Posterior vena cava (tissue), 2 donors: ENCODE measurements at regions of chr15 and their contacts with region 1.

Region 1: DNA sequence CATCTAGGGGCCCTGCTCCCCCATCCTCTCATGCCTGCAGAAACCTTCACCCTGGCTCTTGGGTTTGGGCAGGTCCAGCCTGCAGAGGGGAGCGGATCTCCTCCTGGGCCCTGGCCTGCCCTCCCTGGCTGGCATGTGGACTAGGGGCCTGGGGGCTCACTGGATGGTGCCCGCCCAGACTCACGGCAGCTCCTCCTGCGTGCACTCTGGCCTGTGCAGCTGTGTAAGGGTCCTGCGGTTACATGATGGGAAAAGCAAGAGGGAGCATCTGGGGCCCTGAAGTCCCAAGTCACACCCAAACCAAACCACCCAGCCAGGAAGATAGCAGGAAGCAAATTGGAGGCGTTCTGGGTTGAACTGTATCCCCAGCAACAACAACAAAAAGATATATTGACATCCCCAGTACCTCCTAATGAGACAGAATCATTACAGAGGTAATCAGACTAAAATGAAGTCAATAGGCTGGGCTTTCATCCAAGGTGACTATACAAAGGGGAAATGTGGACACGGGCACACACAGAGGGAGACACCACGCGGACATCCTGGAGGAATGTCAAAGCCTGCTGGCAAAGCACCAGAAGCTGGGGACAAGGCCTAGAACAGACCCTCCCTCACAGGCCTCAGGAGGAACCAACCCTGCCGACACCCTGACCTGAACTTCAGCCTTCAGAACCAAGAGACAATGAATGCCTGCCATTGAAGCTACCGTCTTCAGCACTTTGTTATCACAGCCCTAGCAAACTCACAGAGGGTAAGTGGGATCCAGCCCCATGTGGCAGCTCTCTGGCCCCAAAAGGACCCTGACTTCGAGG is 10.4 kb upstream of the CLK3 start:
- DNase-seq: no peak

Region 2: DNA sequence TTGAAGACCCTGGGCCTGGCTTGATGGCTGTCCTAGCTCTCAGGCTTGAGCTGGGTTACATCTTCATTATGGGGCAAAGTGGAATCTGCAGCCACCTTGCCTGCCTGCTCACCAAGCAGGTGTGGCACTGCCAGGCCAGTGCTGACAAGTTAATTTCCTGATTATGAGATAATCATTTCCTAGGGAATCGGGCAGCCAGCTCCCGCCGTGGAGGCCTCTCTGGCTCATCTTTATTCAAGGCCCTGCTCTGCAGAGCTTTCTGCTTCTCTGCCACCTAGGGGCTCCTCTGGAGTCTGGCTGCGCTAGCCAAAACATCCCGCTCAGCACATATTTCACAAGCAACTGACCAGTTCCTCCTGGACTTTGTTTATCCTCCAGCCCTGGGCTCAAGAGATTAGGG is 669.0 kb before region 1 on chr15:
- intact Hi-C with region 1: loop called in 1 of 2 experiments (anchors 5 kb)
- DNase-seq: peak; percentile 82

Region 3: GRCh38 chr15:74307827-74308644 is 297.2 kb before region 1 on chr15:
- intact Hi-C with region 1: no loop called
- DNase-seq: no peak

Region 4: DNA sequence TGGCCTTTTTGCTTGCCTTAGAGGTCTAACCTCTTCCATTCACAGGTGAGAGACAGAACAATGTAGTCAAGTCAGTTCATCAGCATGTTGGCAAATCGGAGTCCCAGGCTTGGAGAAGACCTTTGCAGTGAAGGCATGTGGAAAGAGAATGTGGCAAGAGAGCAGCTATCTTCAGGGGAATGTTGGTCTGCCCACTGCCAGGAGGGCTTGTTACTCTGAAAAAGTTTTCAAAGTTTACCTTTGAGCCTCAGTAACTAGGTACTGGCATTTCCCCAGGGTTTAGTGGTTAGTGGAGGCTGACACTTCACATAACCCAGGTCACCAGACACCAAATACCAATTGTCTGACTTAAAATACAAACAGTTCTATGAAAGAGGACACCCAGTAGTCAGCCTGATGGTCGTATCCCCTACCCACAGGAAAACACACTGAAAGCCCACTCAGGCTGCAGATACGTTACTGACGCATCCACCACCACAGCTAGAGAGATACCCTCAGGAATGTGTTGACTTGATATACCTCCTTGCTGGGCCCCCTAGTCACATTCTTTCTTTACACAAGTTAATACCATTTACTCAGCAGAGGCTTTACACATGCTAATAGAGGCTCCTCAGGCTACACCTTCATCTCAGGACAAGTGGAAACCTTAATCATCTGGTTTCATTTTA is 73.9 kb before region 1 on chr15:
- intact Hi-C with region 1: no loop called
- DNase-seq: no peak

Region 5: DNA sequence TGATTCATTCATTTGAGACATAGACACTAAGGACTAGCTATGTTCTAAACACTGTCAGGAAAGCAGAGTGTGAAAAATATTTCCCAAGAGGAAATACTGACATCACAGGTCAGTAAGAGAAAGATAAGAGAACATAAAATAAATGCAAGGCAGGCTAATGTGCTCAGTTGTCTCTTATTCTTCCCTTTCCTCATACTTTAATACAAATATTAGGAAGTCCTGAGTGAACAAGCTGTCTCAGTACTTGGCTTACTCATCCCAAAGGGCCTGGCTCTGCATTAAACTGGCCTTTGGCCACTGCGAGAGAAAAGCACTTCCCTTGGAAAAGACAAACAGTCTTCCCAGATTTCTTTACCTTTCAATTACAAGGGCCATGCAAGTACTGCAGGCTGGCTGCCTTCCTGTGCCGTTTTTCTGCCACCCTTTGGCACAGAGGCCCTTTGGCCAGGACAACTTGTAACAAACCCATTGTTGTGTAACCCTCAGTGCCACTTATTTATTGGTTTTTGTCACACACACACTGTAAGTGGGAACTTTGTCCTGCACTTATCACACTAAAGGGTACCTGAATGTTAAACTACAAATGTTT is 58.9 kb after region 1 on chr15:
- intact Hi-C with region 1: no loop called
- DNase-seq: no peak

Region 6: GRCh38 chr15:74826364-74826819 is 221.2 kb after region 1 on chr15 and contains the start of gene CPLX3:
- intact Hi-C with region 1: no loop called
- DNase-seq: no peak
- total RNA-seq, gene CPLX3: not detected